ENCODE measurements at regions of chr3 and their contacts with region 1.

Region 1: DNA sequence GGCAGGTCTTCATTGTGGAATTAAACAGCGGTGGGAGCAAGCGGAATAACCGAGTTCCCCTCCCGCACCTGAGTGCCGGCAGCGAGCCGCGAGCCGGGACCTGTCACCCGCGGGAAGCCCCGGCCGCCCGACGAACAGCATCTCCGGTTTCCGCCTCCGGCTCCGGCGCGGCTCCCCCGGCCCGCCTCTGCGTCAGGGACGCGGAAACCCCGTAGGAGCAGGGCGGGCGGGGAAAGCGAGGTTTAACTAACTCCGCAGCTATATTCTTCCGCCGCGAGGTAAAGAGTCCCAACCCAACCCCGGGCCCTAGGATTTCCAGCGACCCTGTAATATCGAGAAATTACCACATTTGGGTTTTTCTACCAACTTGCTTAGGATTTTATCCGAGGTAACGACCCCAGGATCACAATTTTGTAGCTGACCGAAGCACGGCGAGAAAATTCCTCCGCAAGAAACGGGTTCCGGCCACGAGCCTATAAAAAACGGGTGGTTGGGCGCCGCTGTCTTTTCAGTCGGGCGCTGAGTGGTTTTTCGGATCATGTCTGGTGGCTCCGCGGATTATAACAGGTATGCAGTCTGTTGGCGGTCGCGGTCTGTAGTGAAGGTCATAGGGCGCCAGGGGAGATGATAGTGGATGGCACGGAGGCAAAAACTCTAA is at the start of gene EIF4A2:
- DNase-seq: peak; percentile 86
- H3K4me3 ChIP-seq: peak within 1 kb of the TSS; percentile 38 to 85 (median 72)
- H3K27ac ChIP-seq: peak within 1 kb of the TSS; percentile 93
- H3K4me1 ChIP-seq: peaks cover 26% of the 10 kb centered on the region
- H3K27me3 ChIP-seq: no peaks in the 10 kb centered on the region
- CTCF ChIP-seq: no peak
- POLR2A ChIP-seq: peak; percentile 99
- total RNA-seq, gene EIF4A2: 260 and 282 TPM in 2 replicates

Region 2: GRCh38 chr3:185937689-185938463 is 845.3 kb before region 1 on chr3 and contains the start of gene TRA2B:
- CTCF ChIA-PET with region 1: no interaction called
- POLR2A ChIA-PET with region 1: interaction called, 3 read pairs
- dilution Hi-C with region 1: no loop called
- intact Hi-C with region 1: loop called (anchors 2 kb)
- DNase-seq: peak; percentile 99
- H3K4me3 ChIP-seq: peak within 1 kb of the TSS; percentile 41 to 98 (median 97)
- H3K27ac ChIP-seq: peak within 1 kb of the TSS; percentile 76
- H3K4me1 ChIP-seq: peaks cover 26% of the 10 kb centered on the region
- H3K27me3 ChIP-seq: peaks cover 0 to 3% of the 10 kb centered on the region in 2 experiments
- CTCF ChIP-seq: peak in 1 of 2 donors; percentile 38
- POLR2A ChIP-seq: peak; percentile 99
- total RNA-seq, gene TRA2B: 199 and 214 TPM in 2 replicates

Region 3: GRCh38 chr3:186570096-186570940 is 212.9 kb before region 1 on chr3 and contains the start of gene DNAJB11:
- CTCF ChIA-PET with region 1: no interaction called
- POLR2A ChIA-PET with region 1: interaction called, 27 read pairs
- dilution Hi-C with region 1: no loop called
- intact Hi-C with region 1: loop called (anchors 1 kb)
- DNase-seq: peak; percentile 100
- H3K4me3 ChIP-seq: peak within 1 kb of the TSS; percentile 80 to 91 (median 90)
- H3K27ac ChIP-seq: peak within 1 kb of the TSS; percentile 67
- H3K4me1 ChIP-seq: peaks cover 18% of the 10 kb centered on the region
- H3K27me3 ChIP-seq: no peaks in the 10 kb centered on the region
- CTCF ChIP-seq: no peak
- POLR2A ChIP-seq: peak; percentile 87
- total RNA-seq, gene DNAJB11: 87.6 and 100 TPM in 2 replicates

Region 4: DNA sequence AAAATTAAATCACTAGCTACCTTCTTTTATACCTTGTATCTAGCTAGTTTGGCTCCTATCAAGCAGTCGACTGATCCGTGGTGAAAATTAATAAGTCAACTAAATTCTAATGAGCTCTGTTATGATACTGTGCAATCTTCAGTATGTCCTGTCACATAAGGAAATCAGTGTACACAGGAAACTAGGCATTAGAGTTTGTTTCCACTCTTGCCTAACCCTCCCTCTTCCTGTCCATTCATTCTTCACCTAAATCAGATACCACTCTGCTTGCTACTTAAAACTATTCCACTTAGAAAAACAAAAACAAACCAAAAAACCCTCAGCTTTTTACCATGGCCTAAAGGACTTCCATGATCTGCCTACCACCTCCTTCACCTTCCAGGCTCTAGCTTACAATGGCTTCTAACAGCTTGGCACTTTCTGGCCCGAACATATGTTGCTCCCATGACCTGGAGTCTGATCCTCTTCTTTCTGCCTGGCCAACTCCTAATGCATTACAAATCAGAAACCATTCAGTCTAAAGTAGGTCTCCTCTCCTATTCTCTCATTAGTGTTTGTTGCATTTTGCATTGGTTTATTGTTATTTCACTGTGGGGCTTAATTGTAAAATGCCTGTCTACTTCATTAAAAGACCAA is 15.2 kb after region 1 on chr3:
- CTCF ChIA-PET with region 1: interaction called, 3 read pairs
- POLR2A ChIA-PET with region 1: interaction called, 18 read pairs
- dilution Hi-C with region 1: no loop called
- intact Hi-C with region 1: no loop called
- DNase-seq: peak; percentile 42
- H3K4me3 ChIP-seq: no peak overlapping the region
- H3K27ac ChIP-seq: no peak overlapping the region
- H3K4me1 ChIP-seq: peaks cover 12% of the 10 kb centered on the region
- H3K27me3 ChIP-seq: no peaks in the 10 kb centered on the region
- CTCF ChIP-seq: no peak
- POLR2A ChIP-seq: no peak

Region 5: DNA sequence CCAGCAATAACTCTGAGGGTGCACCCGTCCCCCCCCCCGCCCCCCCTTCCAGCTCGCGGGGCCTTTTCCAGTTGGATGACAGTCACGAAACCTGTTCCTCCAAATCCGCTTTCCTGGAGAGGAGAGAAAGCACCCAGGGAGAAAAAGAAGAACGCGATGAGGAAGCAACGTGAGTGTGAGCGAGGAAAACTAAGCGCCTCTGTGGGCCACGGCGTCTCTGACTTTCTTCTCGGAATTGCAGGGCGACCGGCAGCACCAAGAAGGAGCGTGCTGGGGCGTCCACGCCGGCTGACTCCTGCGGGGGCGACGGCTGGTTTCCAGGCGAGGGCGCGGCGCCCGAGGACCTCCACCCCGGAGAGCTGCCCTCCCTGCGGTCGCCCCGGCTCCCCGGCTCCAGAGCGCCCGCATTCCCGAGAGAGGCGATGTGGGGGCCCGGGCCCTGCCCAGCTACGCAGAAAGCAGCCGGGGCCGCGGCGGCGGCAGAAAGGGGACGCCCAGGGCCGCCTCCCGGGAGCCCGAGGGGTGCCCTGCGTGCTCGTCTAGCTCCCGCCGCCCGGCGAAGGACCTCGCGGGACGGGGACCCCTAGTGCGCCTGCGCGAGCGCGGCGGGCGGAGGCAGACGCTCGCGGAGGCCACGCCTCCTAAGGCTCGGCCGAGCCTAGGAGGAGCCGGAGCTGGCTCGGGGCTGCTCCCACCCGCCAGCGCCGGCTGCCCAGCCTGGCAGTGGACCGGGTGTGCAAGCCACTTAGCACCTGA is 44.0 kb after region 1 on chr3:
- CTCF ChIA-PET with region 1: interaction called, 5 read pairs
- POLR2A ChIA-PET with region 1: interaction called, 16 read pairs
- dilution Hi-C with region 1: no loop called
- intact Hi-C with region 1: no loop called
- DNase-seq: peak; percentile 78
- H3K4me3 ChIP-seq: peak overlapping the region; percentile 28 to 69 (median 52)
- H3K27ac ChIP-seq: no peak overlapping the region
- H3K4me1 ChIP-seq: peaks cover 6% of the 10 kb centered on the region
- H3K27me3 ChIP-seq: peaks cover 30 to 37% of the 10 kb centered on the region in 2 experiments
- CTCF ChIP-seq: no peak
- POLR2A ChIP-seq: peak; percentile 82